ENCODE measurements at regions of chr15 and their contacts with region 1.

Region 1: DNA sequence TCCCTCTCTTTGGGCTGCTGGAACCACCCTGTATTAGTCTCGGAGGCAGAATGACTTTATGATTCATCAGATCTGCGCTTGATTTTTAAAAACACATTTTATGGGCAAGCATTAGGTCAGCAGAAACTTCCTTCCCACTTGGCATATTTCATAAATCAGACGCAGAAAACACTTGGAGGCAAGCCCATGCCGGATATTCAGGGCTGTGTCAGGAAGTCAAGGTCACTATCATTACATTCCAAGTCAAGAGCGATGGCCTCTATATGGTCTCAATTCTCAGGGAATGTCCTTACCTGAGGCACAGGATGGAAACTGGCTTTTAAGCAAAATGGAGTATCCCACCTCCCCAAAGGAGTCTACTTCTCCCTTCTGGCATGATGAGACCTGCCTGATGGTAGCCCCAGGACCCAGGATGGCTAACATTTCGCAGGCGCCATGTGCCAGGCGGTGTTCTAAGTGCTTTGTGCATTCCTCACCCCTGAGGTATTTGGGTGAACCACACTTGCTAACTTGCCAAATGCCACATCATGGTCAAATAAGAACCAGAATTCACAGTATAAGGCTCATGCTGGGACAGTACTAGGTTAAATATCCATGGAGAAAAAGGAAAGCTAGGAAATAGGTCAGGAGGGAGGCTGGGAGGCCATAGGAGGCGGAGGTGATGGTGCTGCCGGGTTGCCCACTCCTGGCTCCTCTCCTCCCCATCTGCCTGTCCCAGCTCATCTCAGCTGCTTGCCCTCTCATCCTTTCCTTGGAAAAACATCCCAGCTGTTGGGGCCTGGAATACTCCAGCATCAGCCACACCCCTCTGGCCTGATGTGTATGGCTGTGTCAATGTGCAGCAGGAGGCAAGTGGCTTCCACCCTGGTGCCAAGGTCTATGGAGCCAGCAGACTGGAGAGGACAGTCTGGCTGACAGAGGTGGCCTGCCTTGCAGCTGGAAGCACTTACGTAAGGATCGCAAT is 18.8 kb downstream of the BCL2L10 start:
- DNase-seq: peak; percentile 36
- H3K4me3 ChIP-seq: no peak overlapping the region
- H3K27ac ChIP-seq: no peak overlapping the region
- H3K4me1 ChIP-seq: peaks cover 5% of the 10 kb centered on the region
- H3K27me3 ChIP-seq: no peaks in the 10 kb centered on the region
- CTCF ChIP-seq: no peak

Region 2: GRCh38 chr15:52112203-52112750 is 18.5 kb after region 1 on chr15:
- CTCF ChIA-PET with region 1: no interaction called
- POLR2A ChIA-PET with region 1: no interaction called
- intact Hi-C with region 1: no loop called
- DNase-seq: no peak
- H3K4me3 ChIP-seq: peak overlapping the region; percentile 35
- H3K27ac ChIP-seq: no peak overlapping the region
- H3K4me1 ChIP-seq: peaks cover 6% of the 10 kb centered on the region
- H3K27me3 ChIP-seq: no peaks in the 10 kb centered on the region
- CTCF ChIP-seq: no peak

Region 3: DNA sequence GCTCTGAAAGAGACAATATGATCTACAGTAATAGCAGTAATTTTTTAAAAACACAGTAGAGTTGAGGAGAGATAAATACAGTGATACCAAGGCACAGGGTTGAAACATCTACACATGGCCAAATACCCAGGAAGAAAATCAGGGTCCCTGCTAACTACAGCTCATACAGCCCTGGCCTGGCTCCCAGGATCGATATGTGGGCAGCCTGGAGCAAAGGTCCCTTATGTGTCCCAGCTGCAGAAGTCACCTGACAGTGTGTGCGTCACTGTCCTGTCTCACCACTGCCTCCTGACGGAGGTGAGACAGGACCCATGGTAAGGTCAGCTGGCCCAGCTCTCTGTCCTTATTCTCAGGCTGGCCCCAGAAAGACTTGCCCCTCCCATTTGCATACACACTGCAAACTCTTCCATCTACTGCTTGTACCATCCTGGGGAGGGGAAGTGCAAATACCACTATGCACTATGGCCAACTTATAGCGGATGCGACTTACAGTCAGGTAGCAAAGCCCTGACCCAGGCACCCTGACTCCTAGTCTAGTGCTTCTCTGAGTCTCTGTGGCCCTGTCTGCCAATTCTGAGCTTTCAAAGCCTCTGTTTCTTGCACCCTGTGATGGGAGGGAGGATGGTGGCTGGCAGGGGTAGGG is 40.8 kb after region 1 on chr15:
- CTCF ChIA-PET with region 1: no interaction called
- POLR2A ChIA-PET with region 1: no interaction called
- intact Hi-C with region 1: no loop called
- DNase-seq: no peak
- H3K4me3 ChIP-seq: no peak overlapping the region
- H3K27ac ChIP-seq: no peak overlapping the region
- H3K4me1 ChIP-seq: no peaks in the 10 kb centered on the region
- H3K27me3 ChIP-seq: no peaks in the 10 kb centered on the region
- CTCF ChIP-seq: no peak

Region 4: GRCh38 chr15:52179278-52180195 is 85.7 kb after region 1 on chr15:
- CTCF ChIA-PET with region 1: no interaction called
- POLR2A ChIA-PET with region 1: interaction called, 10 read pairs
- intact Hi-C with region 1: no loop called
- DNase-seq: peak; percentile 84
- H3K4me3 ChIP-seq: peak overlapping the region; percentile 69
- H3K27ac ChIP-seq: peak overlapping the region; percentile 72
- H3K4me1 ChIP-seq: no peaks in the 10 kb centered on the region
- H3K27me3 ChIP-seq: no peaks in the 10 kb centered on the region
- CTCF ChIP-seq: no peak

Measured in A673 (cell line).